SK-N-SH (cell line): ENCODE measurements at regions of chr22 and their contacts with region 1.

Region 1: DNA sequence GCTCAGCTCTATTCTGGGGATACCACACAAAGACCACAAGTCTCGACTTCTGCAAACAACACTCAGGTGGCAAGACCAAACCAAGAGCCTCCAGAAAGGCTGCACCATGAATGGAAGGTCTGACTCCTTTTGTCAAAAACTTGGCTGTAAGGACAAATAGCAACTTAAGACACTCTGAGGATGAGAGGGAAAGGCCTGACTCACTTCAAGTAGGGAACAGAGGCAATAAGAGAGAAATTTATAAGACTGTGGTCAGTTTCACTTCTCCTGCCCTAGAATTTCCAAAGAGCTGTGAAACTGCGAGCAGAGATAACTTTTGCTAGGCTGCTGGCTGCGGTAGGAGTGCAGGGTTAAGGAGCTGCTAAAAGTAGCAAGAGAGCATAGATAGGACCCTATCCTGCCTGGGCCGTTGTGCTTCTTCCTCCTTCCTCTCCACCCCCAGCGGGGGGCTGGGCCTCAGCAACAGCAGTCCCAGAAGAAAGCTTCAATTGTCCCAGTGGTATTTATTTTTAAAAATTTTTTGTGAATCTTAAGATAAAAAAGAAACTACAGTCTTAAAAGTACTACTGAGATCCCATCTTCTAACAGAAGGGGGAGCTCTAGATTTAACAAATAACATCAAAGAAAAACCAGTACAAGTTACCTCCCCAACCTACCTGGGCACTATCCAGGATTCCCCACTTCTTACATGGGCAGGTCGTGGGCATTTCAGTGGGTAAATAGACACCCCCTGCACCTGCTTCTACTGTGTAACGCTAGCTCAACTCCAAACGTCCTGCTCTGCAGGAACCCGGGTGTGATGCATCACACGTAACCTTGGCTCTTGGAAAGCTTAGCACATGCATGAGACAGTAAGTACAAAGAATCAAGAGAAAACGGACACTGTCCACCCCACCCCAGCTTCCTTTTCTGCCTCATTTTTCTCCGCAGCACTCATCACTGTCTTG is 66.4 kb downstream of the SGSM3 start:
- DNase-seq: peak; percentile 39
- H3K4me3 ChIP-seq: no peak overlapping the region
- H3K27ac ChIP-seq: peak overlapping the region in 1 of 2 experiments; percentile 46; a peak in 2 of 4 replicates
- H3K4me1 ChIP-seq: no peaks in the 10 kb centered on the region
- H3K27me3 ChIP-seq: no peaks in the 10 kb centered on the region
- CTCF ChIP-seq: peak; percentile 60
- EP300 ChIP-seq: no peak
- RAD21 ChIP-seq: peak; percentile 60

Region 2: DNA sequence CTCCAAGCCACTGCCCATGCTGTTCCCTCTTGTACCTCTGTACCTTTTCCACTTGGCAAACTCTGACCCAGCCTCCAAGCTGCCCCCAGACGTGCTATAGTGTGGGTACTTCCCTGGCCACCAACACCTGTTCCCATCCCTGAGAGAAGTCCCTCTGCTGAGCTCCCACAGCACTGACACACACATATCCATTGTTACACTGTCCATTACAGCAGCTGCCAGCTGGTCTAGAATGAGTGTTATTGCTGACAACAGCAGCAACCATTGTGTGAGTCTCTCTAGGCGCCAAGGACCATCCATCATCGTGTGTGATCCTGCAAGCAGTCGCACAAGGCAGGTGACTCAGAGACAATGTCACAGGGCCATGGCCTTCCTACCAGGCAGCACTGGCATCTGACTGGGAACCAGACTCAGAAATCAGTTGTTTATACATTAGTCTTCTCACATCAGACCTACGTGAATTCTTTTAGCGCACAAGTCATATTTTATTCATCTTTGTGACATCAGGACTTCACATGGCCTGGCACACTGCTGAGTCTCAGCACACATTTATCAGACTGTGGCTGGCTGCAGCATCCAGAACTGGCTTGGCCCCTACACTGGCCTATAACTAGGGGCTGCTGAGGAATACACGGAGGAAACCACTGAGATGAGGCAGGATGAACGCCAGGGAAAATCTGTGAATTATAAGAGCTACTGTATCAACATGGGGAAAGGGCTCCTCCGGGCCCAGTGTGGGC is 10.0 kb before region 1 on chr22:
- CTCF ChIA-PET with region 1: interaction called, 30 read pairs
- POLR2A ChIA-PET with region 1: no interaction called
- DNase-seq: no peak
- H3K4me3 ChIP-seq: no peak overlapping the region
- H3K27ac ChIP-seq: no peak overlapping the region
- H3K4me1 ChIP-seq: no peaks in the 10 kb centered on the region
- H3K27me3 ChIP-seq: no peaks in the 10 kb centered on the region
- CTCF ChIP-seq: no peak
- EP300 ChIP-seq: no peak
- RAD21 ChIP-seq: no peak

Region 3: DNA sequence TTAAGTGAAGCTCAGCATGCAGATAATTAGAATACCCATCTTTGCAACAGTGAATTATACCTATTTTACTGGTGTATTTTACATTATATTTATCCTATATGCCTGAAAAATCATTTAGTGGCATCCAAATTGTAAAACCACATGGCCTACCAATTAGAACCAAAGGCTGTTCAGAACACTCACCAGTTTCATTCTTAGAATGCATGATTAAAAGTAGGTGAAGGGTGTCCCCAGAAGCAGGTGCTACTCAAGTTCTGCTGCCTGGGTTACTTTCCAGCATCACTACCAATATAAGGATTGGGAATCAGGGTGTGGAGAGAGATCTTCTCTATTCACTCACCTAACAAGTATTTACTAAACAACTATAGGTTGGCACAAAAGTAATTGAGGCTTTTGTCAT is 36.9 kb after region 1 on chr22:
- CTCF ChIA-PET with region 1: interaction called, 15 read pairs
- POLR2A ChIA-PET with region 1: no interaction called
- DNase-seq: no peak
- H3K4me3 ChIP-seq: no peak overlapping the region
- H3K27ac ChIP-seq: no peak overlapping the region
- H3K4me1 ChIP-seq: no peaks in the 10 kb centered on the region; a peak in 2 of 4 replicates
- H3K27me3 ChIP-seq: no peaks in the 10 kb centered on the region
- CTCF ChIP-seq: no peak
- EP300 ChIP-seq: no peak
- RAD21 ChIP-seq: no peak

Region 4: GRCh38 chr22:40636380-40637182 is 199.8 kb after region 1 on chr22 and contains the start of gene MRTFA:
- CTCF ChIA-PET with region 1: interaction called, 10 read pairs
- POLR2A ChIA-PET with region 1: no interaction called
- DNase-seq: peak; percentile 87
- H3K4me3 ChIP-seq: peak within 1 kb of the TSS; percentile 66 to 68
- H3K27ac ChIP-seq: peak within 1 kb of the TSS; percentile 66 to 71; a peak in 3 of 4 replicates
- H3K4me1 ChIP-seq: peaks cover 4 to 10% of the 10 kb centered on the region in 2 experiments; a peak in 3 of 4 replicates
- H3K27me3 ChIP-seq: no peaks in the 10 kb centered on the region
- CTCF ChIP-seq: no peak
- EP300 ChIP-seq: no peak
- RAD21 ChIP-seq: no peak
- polyA plus RNA-seq, gene MRTFA: 2.9 and 5.8 TPM in 2 replicates

Region 5: DNA sequence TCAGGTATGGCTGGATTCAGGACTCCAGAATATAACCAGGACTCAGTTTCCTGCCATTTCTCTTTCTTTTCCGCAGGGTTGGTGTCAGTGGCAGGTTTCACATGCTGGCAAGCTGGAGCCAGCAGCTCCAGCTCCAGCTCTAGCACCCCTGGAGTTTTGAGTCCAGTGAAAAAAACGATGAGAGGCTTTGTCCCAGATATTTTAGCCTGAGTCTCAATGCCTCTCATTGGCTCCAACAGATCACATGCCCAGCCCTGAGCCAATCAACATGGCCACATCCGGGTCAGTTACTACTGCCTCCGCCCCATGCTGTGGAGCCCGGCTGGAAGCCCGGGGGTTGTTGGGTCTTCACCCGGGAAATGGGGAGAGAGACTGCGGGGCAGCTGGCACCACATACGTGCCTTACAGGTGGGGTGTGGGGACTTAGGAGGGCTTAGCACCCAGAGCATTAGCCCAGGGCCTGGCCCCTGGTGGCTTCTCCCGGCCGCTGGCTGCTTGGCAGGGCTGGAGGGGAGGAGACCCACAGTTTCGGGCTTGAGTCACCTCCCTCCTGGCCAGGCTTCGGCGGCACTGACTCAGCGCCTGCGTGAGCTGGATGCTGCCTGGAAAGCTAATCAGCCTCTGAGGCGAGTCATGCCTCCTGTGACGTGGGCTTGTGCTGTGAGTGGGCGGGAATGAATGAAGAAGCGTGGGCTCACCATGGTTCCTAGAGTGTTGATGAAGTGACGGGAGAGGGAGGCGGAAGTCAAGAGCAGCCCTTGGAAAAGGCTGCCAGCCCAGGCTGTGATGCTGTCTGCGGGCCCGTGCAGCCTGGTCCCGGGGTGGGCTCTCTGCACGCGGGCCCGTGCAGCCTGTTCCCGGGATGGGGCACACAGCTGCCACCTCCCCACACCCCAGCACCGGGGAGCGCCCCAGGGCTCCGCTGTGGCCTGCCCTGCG is 215.1 kb after region 1 on chr22:
- CTCF ChIA-PET with region 1: interaction called, 49 read pairs
- POLR2A ChIA-PET with region 1: no interaction called
- DNase-seq: peak; percentile 84
- H3K4me3 ChIP-seq: peak overlapping the region; percentile 58 to 70
- H3K27ac ChIP-seq: peak overlapping the region; percentile 92 to 98
- H3K4me1 ChIP-seq: peaks cover 21 to 23% of the 10 kb centered on the region in 2 experiments; a peak in 2 of 4 replicates
- H3K27me3 ChIP-seq: no peaks in the 10 kb centered on the region
- CTCF ChIP-seq: no peak
- EP300 ChIP-seq: no peak
- RAD21 ChIP-seq: no peak